Adrenal gland (tissue), 19 donors: ENCODE measurements at regions of chr17 and their contacts with region 1.

Region 1: DNA sequence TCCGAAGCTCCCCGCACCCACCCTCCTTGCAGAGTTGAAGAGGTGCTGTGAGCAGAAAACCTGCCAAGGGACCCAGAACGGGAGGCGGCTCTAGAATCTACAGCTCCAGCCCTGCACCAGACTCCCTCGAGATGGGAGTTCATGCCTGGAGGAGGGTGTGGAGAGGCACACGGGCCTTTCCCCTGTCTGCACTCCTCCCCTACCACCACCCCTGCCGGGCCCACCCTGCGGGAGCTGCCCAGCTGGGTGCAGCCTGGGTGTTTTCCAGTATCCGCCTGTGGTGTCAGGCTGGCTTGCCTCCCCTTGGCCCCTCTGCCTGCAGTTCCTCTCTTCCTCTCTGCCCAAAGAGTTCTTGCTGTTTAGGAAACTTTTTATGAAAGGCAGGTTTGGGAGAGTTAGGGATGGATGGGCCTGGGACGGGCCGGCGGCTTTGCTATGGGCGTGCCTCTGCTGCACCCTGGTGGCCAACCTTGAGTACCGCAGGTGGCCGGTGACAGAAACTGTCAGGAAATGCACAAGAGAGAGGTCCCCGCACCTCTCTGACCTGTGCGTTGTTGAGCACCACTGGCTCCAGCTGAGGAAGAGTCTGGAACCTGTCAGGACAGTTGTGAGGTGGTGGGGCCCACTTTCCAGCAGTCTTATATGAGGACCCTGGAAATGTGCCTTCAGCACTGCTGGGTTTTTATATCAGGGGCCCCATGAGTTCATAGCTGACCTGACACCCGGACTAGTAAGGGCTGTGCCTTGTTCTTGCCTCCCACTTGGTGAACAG is 354.1 kb downstream of the SEC14L1 start:
- DNase-seq: peak; percentile 67 to 91 (median 83)
- H3K4me3 ChIP-seq: no peak overlapping the region
- H3K27ac ChIP-seq: peak overlapping the region in 2 of 5 donors; percentile 2 to 10
- H3K4me1 ChIP-seq: peaks cover 0 to 14% of the 10 kb centered on the region in 2 donors
- H3K27me3 ChIP-seq: no peaks in the 10 kb centered on the region
- CTCF ChIP-seq: peak; percentile 94 to 99 (median 98)
- POLR2A ChIP-seq: no peak

Region 2: DNA sequence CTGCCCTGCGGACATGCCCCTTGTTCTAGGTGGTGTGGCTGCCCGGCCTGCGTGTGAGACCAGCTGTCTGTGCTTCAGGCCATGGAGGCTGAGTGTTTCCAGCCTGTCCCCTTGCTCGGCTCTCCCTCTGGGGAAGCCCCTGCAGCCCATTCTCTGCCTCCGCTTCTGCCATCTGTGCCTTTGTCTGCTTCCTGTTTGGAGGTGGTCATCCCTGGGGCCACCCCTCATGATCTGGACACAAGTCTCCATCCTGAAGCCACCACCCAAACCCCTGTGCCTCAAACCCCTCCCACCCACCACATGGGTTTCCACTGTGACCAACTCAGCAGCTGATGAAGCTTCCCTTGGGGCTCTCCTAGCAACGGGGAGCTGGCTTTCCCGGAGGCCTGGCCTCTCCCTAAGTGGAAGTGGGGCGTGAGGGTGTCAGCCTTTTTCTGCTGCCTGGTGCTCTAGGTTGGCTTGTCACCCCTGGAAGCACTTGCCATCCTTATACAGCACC is 169.2 kb before region 1 on chr17:
- intact Hi-C with region 1: loop called (anchors 2 to 5 kb)
- DNase-seq: peak in 1 of 7 donors; percentile 23
- H3K4me3 ChIP-seq: no peak overlapping the region
- H3K27ac ChIP-seq: peak overlapping the region in 4 of 5 donors; percentile 7 to 99 (median 72)
- H3K4me1 ChIP-seq: peaks cover 35 to 47% of the 10 kb centered on the region in 2 donors
- H3K27me3 ChIP-seq: no peaks in the 10 kb centered on the region
- CTCF ChIP-seq: no peak
- POLR2A ChIP-seq: no peak

Region 3: DNA sequence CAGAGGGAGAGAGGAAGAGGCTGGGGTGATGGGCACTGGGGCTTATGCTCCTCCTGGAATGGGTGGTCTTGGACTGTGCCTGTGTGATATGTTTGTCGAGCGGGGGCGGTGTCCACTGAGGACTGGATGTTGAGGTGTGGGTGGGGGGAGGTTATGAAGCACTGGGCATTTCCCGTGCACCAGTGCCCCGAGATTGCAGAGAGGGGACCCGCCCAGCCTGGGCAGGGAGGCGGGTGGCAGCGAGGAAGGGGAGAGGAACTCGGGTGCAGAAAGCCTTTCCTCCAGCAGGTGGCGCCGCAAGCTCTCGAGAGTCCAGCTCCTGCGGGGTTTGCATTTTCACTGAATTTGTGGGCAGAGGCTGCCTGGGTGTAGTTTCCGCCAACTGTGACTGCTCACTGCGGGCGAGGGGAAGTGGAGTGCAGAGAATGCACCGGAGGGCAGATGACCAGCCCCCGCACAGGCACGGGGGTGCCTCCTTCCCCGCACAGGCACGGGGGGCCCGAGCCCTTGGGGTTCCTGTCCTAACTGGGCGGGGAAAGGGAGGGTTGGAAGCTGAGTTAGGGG is 163.5 kb before region 1 on chr17:
- intact Hi-C with region 1: loop called (anchors 2 to 5 kb)
- DNase-seq: peak; percentile 89 to 97 (median 96)
- H3K4me3 ChIP-seq: no peak overlapping the region
- H3K27ac ChIP-seq: peak overlapping the region in 3 of 5 donors; percentile 48 to 64 (median 64)
- H3K4me1 ChIP-seq: peaks cover 4 to 10% of the 10 kb centered on the region in 2 donors
- H3K27me3 ChIP-seq: no peaks in the 10 kb centered on the region
- CTCF ChIP-seq: peak; percentile 91 to 97 (median 96)
- POLR2A ChIP-seq: no peak

Region 4: GRCh38 chr17:77590951-77591735 is 96.3 kb after region 1 on chr17:
- intact Hi-C with region 1: no loop called
- DNase-seq: no peak
- H3K4me3 ChIP-seq: no peak overlapping the region
- H3K27ac ChIP-seq: no peak overlapping the region
- H3K4me1 ChIP-seq: no peaks in the 10 kb centered on the region
- H3K27me3 ChIP-seq: peaks cover 3% of the 10 kb centered on the region
- CTCF ChIP-seq: no peak
- POLR2A ChIP-seq: no peak